Activated T-helper 1 cell treated with anti-CD3 and anti-CD28 coated beads, Interleukin-12 subunit alpha, Interleukin-12 subunit beta, Interleukin-2, Interleukin-4 antibody, amounts not matched to agents 30 ng/mL and 10 ng/mL and 1 ng/mL, durations not matched to agents 14 hours and 24 hours and 36 hours (primary cell): ENCODE measurements at regions of chr10 and their contacts with region 1.

Region 1: DNA sequence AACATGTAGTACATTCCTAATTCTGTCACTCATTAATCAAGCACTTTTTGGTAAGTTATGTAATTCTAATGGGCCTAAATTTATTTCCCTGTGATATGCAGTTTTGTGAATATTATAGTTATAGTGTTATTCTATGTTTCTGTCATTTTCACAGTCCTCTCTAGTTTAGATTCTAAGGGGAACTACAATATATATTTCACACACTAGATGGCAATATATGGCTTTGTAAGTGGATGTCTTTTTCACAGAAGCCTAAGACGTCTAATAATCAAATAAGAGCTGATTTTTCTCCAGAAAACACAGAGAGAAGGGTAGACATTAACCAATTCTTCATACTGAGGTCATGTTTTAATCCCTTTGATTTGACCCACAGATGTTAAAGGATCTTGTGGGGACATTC is 18.0 kb downstream of the RNLS start:
- DNase-seq: no peak
- H3K4me3 Mint-ChIP-seq: no peak overlapping the region
- H3K27ac Mint-ChIP-seq: no peak overlapping the region
- H3K4me1 Mint-ChIP-seq: peaks cover 4% of the 10 kb centered on the region
- H3K27me3 Mint-ChIP-seq: peaks cover 18% of the 10 kb centered on the region

Region 2: DNA sequence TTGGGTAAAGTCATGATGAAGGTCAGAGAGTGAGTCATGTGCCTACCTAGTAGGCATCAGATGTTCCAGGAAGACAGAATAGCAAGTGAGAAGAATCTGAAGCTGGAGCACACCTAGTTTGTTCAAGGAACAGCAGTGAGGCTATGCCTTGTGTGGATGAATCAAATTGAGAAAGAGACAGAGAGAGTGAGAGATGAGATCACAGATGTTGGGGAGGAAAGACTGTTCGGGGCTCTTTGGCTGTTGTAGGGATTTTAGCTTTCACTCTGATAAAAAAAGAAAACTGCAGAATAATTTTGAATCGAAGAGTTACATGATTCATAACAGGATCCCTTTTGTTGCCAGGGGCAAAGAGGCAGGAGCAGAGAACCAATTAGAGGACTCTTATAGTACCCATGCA is 105.4 kb after region 1 on chr10:
- intact Hi-C with region 1: no loop called
- DNase-seq: no peak
- H3K4me3 Mint-ChIP-seq: no peak overlapping the region
- H3K27ac Mint-ChIP-seq: peak overlapping the region; percentile 7
- H3K4me1 Mint-ChIP-seq: peaks cover 7% of the 10 kb centered on the region
- H3K27me3 Mint-ChIP-seq: peaks cover 5% of the 10 kb centered on the region

Region 3: GRCh38 chr10:88687853-88688467 is 122.9 kb after region 1 on chr10:
- intact Hi-C with region 1: loop called (anchors 2 kb)
- DNase-seq: no peak
- H3K4me3 Mint-ChIP-seq: no peak overlapping the region
- H3K27ac Mint-ChIP-seq: no peak overlapping the region
- H3K4me1 Mint-ChIP-seq: no peaks in the 10 kb centered on the region
- H3K27me3 Mint-ChIP-seq: peaks cover 39% of the 10 kb centered on the region